ENCODE measurements at regions of chr2 and their contacts with region 1.

Region 1: GRCh38 chr2:30223413-30223874 is 7.9 kb upstream of the LBH start:
- DNase-seq: no peak
- H3K4me3 Mint-ChIP-seq: no peak overlapping the region
- H3K27ac Mint-ChIP-seq: no peak overlapping the region
- H3K4me1 Mint-ChIP-seq: peaks cover 8% of the 10 kb centered on the region
- H3K27me3 Mint-ChIP-seq: no peaks in the 10 kb centered on the region
- CTCF ChIP-seq: no peak

Region 2: DNA sequence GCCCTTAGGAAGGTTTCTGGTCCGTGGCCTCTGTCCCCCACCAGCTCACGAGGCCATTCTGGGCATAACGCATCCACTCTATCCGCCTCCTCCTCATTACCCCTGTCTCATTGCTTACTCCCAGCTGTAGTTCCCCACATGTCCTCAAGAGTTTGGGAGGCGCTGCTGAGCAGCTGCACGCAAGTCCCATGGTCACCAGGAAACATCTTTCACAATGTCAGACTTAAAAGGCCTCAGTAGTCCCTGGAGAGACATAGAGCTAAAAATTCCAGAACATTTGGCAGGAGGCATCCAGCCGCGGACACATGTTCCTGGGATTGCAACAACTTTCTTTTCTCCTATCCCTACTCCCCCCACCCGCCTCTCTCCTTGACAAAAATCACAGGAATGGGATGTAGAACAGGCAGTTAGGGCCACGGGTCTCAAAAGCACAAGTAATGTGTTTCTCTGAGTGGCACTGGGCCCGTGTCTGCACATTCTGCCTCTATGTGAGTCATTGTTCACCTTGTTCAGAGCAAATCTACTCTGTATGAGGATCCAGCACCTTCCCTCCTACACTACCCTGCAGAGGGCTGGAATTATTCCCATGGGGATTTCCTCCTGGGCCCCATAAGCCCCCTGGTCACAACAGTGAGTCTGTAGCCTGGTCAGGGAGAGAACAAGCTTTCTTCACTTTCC is 16.0 kb after region 1 on chr2:
- CTCF ChIA-PET with region 1: interaction called, 15 read pairs
- POLR2A ChIA-PET with region 1: interaction called, 3 read pairs
- intact Hi-C with region 1: no loop called
- DNase-seq: peak; percentile 76
- H3K4me3 Mint-ChIP-seq: no peak overlapping the region
- H3K27ac Mint-ChIP-seq: no peak overlapping the region
- H3K4me1 Mint-ChIP-seq: peaks cover 14% of the 10 kb centered on the region
- H3K27me3 Mint-ChIP-seq: no peaks in the 10 kb centered on the region
- CTCF ChIP-seq: peak; percentile 91